Mammary epithelial cell (primary cell): ENCODE measurements at regions of chr22 and their contacts with region 1.

Region 1: DNA sequence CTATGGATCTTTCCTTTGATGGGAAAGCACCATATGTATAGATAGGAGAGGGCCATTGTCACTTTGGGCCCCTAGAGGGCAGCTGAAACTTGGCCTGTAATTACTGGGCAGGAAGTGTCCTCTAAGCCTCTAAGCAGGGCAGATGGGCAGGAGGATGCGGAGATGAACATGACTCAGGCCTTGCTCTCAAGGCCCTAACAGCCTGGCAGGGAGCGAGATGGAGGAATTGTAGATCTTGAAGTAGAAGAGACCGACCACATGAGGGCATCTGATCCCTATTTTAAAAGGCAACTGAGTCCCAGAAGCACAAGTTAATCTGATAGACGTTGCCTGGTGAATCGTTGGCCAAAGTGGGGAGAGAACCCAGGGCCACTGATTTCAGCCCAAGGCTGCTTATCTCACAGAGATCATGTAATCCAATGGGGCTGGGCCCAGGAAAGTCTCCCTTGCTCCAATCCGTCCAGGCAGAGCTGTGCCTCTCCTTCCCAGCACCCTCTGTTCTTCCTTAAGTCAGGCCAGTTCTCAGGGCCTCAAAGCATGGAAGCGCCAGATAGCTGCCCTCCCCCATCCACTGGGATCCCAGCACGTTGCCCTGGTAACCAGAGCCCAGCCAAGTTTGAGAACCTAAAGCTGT is 2.5 kb upstream of the SEPTIN3 start:
- DNase-seq: peak; percentile 87
- H3K4me3 ChIP-seq: no peak overlapping the region
- H3K27ac ChIP-seq: no peak overlapping the region
- H3K4me1 ChIP-seq: peaks cover 7% of the 10 kb centered on the region
- H3K27me3 ChIP-seq: no peaks in the 10 kb centered on the region
- CTCF ChIP-seq: peak; percentile 45 to 52

Region 2: GRCh38 chr22:42062506-42063170 is 95.9 kb after region 1 on chr22:
- CTCF ChIA-PET with region 1: no interaction called
- dilution Hi-C with region 1: no loop called
- in situ Hi-C with region 1: no loop called
- intact Hi-C with region 1: no loop called
- DNase-seq: no peak
- H3K4me3 ChIP-seq: no peak overlapping the region
- H3K27ac ChIP-seq: no peak overlapping the region
- H3K4me1 ChIP-seq: no peaks in the 10 kb centered on the region
- H3K27me3 ChIP-seq: no peaks in the 10 kb centered on the region
- CTCF ChIP-seq: no peak

Region 3: DNA sequence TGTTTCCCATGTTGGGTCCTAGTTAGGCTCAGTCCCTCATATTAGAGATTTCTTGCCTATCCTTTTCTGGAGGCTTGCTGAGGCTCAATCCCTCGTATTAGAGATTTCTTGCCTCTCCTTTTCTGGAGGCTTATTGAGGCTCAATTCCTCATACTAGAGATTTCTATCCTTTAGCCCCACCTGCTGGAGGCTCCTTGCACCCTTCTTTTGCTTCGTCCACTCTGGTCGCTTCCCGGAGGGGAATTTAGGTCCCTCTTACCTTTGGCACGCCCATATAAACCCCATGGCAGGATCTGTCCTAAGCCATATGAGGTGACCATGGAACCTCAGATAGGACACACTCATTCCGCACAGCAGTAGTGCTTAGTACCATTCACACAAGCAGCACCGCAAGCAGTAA is 148.0 kb after region 1 on chr22:
- CTCF ChIA-PET with region 1: no interaction called
- dilution Hi-C with region 1: no loop called
- in situ Hi-C with region 1: no loop called
- intact Hi-C with region 1: loop called (anchors 1 kb)
- DNase-seq: no peak
- H3K4me3 ChIP-seq: no peak overlapping the region
- H3K27ac ChIP-seq: no peak overlapping the region
- H3K4me1 ChIP-seq: no peaks in the 10 kb centered on the region
- H3K27me3 ChIP-seq: no peaks in the 10 kb centered on the region
- CTCF ChIP-seq: no peak

Region 4: DNA sequence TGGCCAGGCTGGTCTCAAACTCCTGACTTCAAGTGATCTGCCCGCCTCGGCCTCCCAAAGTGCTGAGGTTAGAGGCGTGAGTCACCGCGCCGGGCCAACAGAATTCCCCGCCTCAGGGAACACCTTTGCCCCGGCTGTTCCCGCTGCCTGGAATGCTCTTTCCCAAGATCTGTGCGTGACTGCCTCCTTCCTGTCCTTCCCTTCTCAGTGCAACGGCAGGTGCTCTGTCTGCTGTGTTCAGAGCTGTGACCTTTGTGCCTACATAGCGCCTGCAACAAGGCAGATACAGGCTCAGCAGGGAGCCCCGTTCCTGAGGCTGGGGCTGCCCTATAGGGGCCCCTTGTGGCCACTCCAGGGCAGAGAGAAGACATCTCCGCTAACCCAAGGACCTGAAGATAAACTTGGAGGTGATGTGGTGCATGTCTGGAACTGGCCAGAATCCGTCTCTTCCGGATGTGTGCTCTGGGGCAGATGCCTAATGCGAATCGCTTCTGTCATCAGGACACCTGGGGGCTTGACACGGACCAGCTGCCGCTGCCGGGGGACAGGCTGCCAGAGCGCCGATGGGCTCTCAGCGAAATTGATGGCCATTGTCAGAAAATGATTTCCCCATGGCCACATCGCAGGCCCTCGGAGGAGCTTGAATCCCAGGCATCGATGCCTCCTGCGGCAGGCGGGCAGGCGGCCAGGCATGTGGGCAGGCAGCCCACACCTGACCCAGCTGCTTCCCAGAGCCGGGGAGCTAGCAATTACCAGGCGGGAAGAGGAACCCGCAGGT is 347.3 kb after region 1 on chr22:
- CTCF ChIA-PET with region 1: no interaction called
- dilution Hi-C with region 1: no loop called
- in situ Hi-C with region 1: no loop called
- intact Hi-C with region 1: loop called (anchors 2 kb)
- DNase-seq: peak; percentile 84
- H3K4me3 ChIP-seq: no peak overlapping the region
- H3K27ac ChIP-seq: peak overlapping the region; percentile 6
- H3K4me1 ChIP-seq: peaks cover 54% of the 10 kb centered on the region
- H3K27me3 ChIP-seq: no peaks in the 10 kb centered on the region
- CTCF ChIP-seq: peak; percentile 45 to 68

Region 5: DNA sequence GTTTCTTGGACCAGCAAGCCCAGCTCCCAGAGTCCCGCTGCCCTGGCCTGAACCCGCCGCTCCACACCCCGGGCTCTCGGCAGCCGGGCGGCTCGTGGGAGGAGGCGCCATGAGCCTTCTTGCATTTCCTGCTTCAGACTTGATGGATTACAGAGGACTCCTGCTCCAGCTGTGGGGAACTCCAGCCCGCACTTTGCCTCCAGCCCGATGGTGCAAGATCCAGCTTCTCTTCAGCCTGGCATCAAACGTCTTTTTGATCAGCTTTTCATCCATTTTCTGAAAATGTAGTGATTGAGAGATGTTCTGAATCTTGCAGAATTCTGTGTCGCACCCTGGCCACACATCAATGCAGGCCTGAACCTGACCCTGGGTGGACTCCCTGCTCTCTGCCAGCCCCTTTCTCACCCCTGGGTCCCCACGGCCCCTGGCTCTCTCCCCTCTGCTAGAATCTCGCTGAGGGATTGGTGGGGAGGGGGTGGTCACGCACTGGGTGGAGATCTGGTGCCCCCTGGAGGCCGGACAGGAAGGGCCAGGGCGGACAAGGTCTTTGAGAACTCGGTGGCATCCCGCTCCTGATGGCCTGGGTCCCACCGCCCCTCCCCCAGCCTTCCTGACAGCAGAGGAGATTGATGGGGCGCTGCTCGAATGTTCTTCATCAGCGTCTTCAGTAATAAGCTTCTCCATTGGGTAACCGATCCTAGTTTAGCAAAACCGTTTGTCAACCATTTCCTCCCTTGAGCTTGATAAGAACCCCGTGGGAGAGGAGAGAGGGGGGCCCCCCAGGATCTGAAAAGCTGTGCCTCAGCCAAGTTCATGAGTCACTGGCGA is 477.6 kb after region 1 on chr22:
- CTCF ChIA-PET with region 1: no interaction called
- dilution Hi-C with region 1: no loop called
- in situ Hi-C with region 1: loop called (anchors 10 kb)
- intact Hi-C with region 1: loop called (anchors 1 kb)
- DNase-seq: peak; percentile 84
- H3K4me3 ChIP-seq: peak overlapping the region in 2 of 3 experiments; percentile 10 to 30
- H3K27ac ChIP-seq: no peak overlapping the region
- H3K4me1 ChIP-seq: peaks cover 22% of the 10 kb centered on the region
- H3K27me3 ChIP-seq: no peaks in the 10 kb centered on the region
- CTCF ChIP-seq: peak; percentile 52 to 70

Region 6: DNA sequence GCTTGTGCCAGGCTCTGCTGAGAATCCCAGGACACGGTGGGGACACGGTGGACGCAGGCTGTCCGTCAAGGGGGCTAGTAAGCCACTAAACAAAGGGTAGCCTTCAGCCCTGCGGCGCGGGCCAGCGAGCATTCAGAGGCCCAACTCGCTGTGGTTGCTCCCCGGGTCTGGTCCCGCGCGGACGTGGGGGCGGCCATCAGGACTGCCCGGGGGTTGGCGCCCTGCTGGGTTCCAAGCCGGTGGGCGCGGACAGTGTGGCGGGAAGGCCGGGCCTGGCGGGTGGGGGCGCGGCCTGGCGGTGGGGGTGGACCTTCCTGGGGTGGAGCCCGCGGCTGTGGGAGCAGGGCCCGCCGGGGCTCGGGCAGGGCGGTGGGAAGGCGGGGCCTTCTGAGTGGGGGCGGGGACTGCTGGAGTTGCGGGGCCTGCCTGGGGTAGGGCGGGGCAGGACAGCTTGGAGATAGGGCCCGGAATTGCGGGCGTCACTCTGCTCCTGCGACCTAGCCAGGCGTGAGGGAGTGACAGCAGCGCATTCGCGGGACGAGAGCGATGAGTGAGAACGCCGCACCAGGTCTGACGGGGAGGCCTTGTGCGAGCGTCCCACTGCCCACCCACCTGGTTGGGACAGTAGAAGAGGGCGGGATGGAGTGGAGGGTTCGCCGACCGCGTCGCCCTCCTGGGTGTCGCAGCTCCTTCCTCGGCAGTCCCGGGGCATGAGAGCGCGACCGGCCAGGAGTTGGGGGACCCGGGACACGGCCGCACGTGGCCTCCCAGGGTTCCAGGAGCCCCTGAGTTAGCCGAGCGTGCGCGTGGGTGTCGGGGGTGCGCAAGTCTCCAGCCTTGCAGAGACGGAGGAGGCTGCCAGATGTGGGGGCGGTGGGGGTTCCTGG is 587.0 kb after region 1 on chr22 and contains the start of gene SERHL2:
- CTCF ChIA-PET with region 1: no interaction called
- dilution Hi-C with region 1: no loop called
- in situ Hi-C with region 1: no loop called
- intact Hi-C with region 1: loop called (anchors 2 kb)
- DNase-seq: peak; percentile 47
- H3K4me3 ChIP-seq: peak within 1 kb of the TSS; percentile 17 to 53 (median 48)
- H3K27ac ChIP-seq: no peak within 1 kb of the TSS
- H3K4me1 ChIP-seq: peaks cover 3% of the 10 kb centered on the region
- H3K27me3 ChIP-seq: no peaks in the 10 kb centered on the region
- CTCF ChIP-seq: no peak
- total RNA-seq, gene SERHL2: 1.7 to 2.3 TPM